Gastrocnemius medialis (tissue), 4 donors: ENCODE measurements at regions of chr3 and their contacts with region 1.

Region 1: GRCh38 chr3:160413613-160414248 is 14.3 kb downstream of the SMC4 start:
- DNase-seq: peak in 1 of 2 donors; percentile 34
- ATAC-seq: peak; percentile 60 to 78
- H3K4me3 ChIP-seq: no peak overlapping the region
- H3K27ac ChIP-seq: no peak overlapping the region
- H3K4me1 ChIP-seq: no peaks in the 10 kb centered on the region
- H3K27me3 ChIP-seq: no peaks in the 10 kb centered on the region
- CTCF ChIP-seq: peak; percentile 55 to 87 (median 74)
- POLR2A ChIP-seq: no peak

Region 2: DNA sequence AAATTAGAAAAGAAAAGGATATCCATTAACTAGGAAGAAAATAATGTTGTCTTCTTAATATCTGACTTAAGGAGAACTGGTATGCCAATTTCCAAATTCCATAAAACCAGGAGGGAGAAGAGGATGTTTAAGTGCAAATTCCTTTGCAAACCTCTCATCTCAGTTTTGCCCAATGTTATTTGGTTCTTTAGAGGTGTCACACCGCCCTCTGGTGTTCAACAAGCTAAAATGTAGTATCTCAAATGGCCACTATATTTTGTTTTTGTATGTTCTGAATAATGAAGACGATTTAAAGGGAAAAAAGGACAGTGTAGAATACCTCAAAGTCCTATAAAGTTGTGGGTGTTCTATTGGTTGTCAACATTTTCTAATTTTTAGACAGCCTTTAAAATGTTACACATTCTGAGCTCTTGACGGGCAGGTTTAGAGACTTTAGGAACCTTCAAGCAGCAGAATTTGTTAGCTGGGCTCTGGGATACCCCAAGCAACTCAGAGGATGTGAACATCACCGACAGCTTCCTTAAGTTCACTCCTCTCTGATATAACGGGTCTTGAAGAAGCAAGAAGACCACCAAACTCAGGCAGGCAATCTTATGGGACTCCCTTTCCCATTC is 1153.6 kb before region 1 on chr3:
- in situ Hi-C with region 1: no loop called
- intact Hi-C with region 1: loop called (anchors 5 kb)
- DNase-seq: no peak
- ATAC-seq: no peak
- H3K4me3 ChIP-seq: no peak overlapping the region
- H3K27ac ChIP-seq: no peak overlapping the region
- H3K4me1 ChIP-seq: no peaks in the 10 kb centered on the region
- H3K27me3 ChIP-seq: no peaks in the 10 kb centered on the region
- CTCF ChIP-seq: peak; percentile 37 to 71 (median 61)
- POLR2A ChIP-seq: no peak

Region 3: GRCh38 chr3:160027541-160028195 is 386.1 kb before region 1 on chr3:
- in situ Hi-C with region 1: loop called (anchors 5 to 25 kb)
- intact Hi-C with region 1: loop called (anchors 1 kb)
- DNase-seq: no peak
- ATAC-seq: no peak
- H3K4me3 ChIP-seq: no peak overlapping the region
- H3K27ac ChIP-seq: no peak overlapping the region
- H3K4me1 ChIP-seq: no peaks in the 10 kb centered on the region
- H3K27me3 ChIP-seq: no peaks in the 10 kb centered on the region
- CTCF ChIP-seq: no peak
- POLR2A ChIP-seq: no peak

Region 4: GRCh38 chr3:160038862-160039562 is 374.7 kb before region 1 on chr3:
- in situ Hi-C with region 1: loop called (anchors 5 to 25 kb)
- intact Hi-C with region 1: no loop called
- DNase-seq: no peak
- ATAC-seq: no peak
- H3K4me3 ChIP-seq: peak overlapping the region in 3 of 4 donors; percentile 26 to 38 (median 35)
- H3K27ac ChIP-seq: no peak overlapping the region
- H3K4me1 ChIP-seq: peaks cover 0 to 5% of the 10 kb centered on the region in 2 donors
- H3K27me3 ChIP-seq: peaks cover 11 to 22% (median 18%) of the 10 kb centered on the region in 3 donors
- CTCF ChIP-seq: no peak
- POLR2A ChIP-seq: no peak

Region 5: GRCh38 chr3:160129459-160130061 is 284.2 kb before region 1 on chr3:
- in situ Hi-C with region 1: no loop called
- intact Hi-C with region 1: no loop called
- DNase-seq: no peak
- ATAC-seq: no peak
- H3K4me3 ChIP-seq: no peak overlapping the region
- H3K27ac ChIP-seq: no peak overlapping the region
- H3K4me1 ChIP-seq: no peaks in the 10 kb centered on the region
- H3K27me3 ChIP-seq: no peaks in the 10 kb centered on the region
- CTCF ChIP-seq: no peak
- POLR2A ChIP-seq: no peak

Region 6: GRCh38 chr3:160163229-160163878 is 250.4 kb before region 1 on chr3:
- in situ Hi-C with region 1: no loop called
- intact Hi-C with region 1: loop called (anchors 10 kb)
- DNase-seq: no peak
- ATAC-seq: no peak
- H3K4me3 ChIP-seq: no peak overlapping the region
- H3K27ac ChIP-seq: no peak overlapping the region
- H3K4me1 ChIP-seq: no peaks in the 10 kb centered on the region
- H3K27me3 ChIP-seq: no peaks in the 10 kb centered on the region
- CTCF ChIP-seq: peak in 1 of 5 experiments; percentile 18
- POLR2A ChIP-seq: no peak

Region 7: DNA sequence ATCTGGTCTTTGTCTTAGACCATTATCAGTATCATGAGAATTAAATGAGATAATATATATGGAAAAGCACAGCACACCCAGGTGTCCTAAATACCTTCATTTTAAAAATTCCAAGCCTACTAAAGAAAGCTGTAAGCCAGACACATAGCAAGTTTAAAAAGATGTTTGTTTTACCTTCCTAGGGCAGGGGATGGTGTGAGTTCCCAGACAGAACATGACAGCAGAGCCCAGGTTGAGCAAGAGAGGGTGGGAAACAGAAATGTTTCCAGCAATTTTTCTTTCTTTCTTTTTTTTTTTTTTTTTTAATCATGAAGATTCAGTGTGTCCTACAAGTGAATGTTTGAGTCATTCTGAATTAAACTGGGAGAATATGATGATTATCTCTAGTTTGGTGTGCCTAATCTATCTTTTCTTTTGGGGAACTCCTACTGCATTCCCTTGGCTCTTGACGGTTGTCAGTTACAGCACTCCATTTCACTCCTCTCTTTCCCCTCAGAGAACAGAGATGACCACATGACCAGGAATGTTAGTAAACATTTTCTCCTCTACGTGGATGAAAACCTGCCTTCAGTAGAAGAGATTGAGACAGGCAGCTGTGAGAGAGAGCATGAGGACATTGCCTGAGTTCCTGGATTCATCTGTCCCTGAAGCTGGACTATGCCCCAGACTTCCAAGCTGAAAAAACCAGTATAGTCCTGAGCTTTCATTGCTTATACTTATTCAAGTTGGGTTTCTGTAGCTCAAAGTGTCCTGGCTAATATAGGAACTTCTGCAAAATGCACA is 208.7 kb after region 1 on chr3:
- in situ Hi-C with region 1: no loop called
- intact Hi-C with region 1: no loop called
- DNase-seq: no peak
- ATAC-seq: peak in 1 of 2 donors; percentile 55
- H3K4me3 ChIP-seq: no peak overlapping the region
- H3K27ac ChIP-seq: no peak overlapping the region
- H3K4me1 ChIP-seq: peaks cover 9 to 15% of the 10 kb centered on the region in 2 donors
- H3K27me3 ChIP-seq: no peaks in the 10 kb centered on the region
- CTCF ChIP-seq: no peak
- POLR2A ChIP-seq: no peak